Activated B cell treated with CpG ODN at 0.5 μM for 24 hours (primary cell): ENCODE measurements at regions of chr12 and their contacts with region 1.

Region 1: DNA sequence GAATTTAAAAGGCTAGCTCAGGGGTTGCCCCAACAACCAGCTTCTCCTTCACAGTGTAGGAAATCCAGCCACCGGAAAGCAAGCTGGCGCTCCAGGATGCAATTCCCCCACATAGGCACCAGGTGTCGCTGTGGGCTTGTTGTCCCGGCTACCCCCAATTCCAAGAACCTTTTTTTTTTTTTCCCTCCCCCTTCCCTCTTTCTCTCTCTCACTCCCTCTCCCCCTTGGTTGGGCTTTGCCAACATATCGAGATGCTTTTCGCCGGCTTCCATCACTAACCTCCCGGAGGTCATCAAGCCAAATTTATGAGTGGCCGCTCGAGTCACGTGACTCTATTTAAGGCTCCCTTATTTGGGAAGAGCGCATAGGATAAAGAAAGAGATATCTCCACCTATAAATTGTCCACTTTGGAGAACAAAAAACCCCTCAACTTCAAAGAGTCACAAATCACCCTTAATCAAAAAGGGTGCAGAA is at the start of gene HOXC5:
- DNase-seq: peak; percentile 51
- ATAC-seq: peak; percentile 63
- H3K4me3 Mint-ChIP-seq: peak within 1 kb of the TSS; percentile 70
- H3K27ac Mint-ChIP-seq: peak within 1 kb of the TSS; percentile 24
- H3K4me1 Mint-ChIP-seq: peaks cover 30% of the 10 kb centered on the region
- H3K27me3 Mint-ChIP-seq: peaks cover 57% of the 10 kb centered on the region
- CTCF ChIP-seq: peak; percentile 66
- total RNA-seq, gene HOXC5: not detected in 2 replicates

Region 2: DNA sequence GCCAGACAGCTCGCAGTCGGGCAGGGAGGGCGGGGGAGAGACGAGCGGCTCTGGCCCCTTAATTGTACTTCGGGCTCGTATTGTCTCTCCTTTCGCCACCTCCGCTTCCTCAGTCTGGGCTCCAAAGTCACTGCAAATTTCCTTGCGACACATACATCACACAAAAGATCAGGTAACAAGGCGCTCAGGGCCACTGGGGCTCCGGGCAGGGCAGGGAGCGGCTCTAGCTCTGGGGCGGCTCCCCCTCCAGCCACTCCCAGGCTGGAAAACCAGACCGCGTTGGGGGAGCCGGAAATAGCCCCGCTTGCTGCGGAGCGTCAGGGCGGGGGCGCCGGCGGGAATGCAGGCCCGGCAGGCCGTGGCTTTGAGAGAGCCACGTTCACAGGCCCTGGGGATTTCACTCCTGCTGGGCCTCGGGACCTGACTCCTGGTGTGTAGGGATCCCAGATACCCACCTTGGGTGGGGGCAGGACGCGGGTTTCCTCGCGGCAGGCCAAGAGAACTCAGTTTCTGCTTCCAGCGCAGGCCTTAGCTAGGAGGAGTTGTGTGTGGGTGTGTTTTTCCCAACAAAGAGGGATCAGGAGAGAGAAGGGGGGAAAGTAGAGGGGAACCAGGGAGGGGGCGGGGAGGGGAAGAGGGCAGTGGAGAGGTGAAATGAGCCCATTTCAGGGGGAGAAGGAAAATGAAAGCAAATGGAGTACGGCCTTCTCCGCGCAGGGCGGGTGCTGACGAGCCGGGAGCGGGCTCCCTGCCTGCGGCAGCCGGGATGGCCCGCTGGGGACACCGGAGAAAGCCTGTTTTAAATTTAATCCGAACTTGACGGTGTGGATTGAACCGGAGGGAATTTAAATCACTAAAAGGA is 37.1 kb before region 1 on chr12:
- CTCF ChIA-PET with region 1: interaction called, 3 read pairs
- POLR2A ChIA-PET with region 1: no interaction called
- intact Hi-C with region 1: loop called (anchors 5 kb)
- DNase-seq: no peak
- ATAC-seq: peak; percentile 37
- H3K4me3 Mint-ChIP-seq: peak overlapping the region; percentile 82
- H3K27ac Mint-ChIP-seq: no peak overlapping the region
- H3K4me1 Mint-ChIP-seq: peaks cover 34% of the 10 kb centered on the region
- H3K27me3 Mint-ChIP-seq: peaks cover 75% of the 10 kb centered on the region
- CTCF ChIP-seq: no peak

Region 3: GRCh38 chr12:54053751-54054741 is 21.4 kb after region 1 on chr12 and contains the start of gene HOXC4:
- CTCF ChIA-PET with region 1: interaction called, 15 read pairs
- POLR2A ChIA-PET with region 1: interaction called, 4 read pairs
- intact Hi-C with region 1: loop called (anchors 2 kb)
- DNase-seq: no peak
- ATAC-seq: peak; percentile 75
- H3K4me3 Mint-ChIP-seq: peak within 1 kb of the TSS; percentile 88
- H3K27ac Mint-ChIP-seq: peak within 1 kb of the TSS; percentile 89
- H3K4me1 Mint-ChIP-seq: peaks cover 50% of the 10 kb centered on the region
- H3K27me3 Mint-ChIP-seq: peaks cover 25% of the 10 kb centered on the region
- CTCF ChIP-seq: no peak
- total RNA-seq, gene HOXC4: 4.3 and 4.8 TPM in 2 replicates

Region 4: DNA sequence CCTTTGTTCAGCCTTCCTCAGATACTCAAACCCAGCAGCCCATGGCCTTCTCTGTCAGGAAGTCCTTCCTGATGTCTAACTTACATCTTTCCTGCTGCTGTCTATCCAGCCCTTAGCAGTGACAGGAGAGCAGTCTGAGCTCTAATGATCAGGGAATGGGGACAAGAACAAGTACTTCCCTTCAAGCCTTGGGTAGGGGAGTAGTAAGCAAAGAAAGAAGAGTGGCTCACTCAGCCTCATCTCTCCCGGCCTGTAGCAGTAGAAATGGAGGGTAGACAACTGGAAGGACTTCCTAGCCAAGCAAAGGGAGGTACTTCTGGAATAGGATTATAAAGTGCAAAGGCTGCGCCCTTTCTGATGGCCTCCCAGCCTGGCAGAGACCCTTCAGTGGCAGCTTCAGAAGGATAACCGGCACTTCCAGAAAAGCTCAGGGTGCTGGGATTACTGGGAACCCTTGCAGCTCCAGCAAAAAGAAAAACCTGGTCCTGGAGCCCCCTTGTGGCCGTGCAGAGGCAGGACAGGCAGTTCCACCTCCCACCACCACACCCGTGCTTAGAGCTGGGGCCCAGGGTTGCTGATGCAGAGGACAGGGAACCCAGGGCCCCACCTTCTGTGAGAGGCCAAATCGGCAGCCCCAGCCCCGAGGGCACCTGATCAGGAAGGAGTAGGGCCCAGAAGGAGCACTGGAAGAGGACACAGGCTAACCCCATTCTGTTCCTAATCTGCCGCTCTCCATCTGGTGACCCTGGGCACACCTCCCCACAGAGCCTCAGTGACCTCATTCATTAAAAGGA is 168.5 kb after region 1 on chr12:
- CTCF ChIA-PET with region 1: interaction called, 65 read pairs
- POLR2A ChIA-PET with region 1: interaction called, 5 read pairs
- intact Hi-C with region 1: loop called (anchors 1 kb)
- DNase-seq: peak; percentile 58
- ATAC-seq: peak; percentile 90
- H3K4me3 Mint-ChIP-seq: no peak overlapping the region
- H3K27ac Mint-ChIP-seq: no peak overlapping the region
- H3K4me1 Mint-ChIP-seq: peaks cover 21% of the 10 kb centered on the region
- H3K27me3 Mint-ChIP-seq: peaks cover 53% of the 10 kb centered on the region
- CTCF ChIP-seq: no peak